ENCODE measurements at regions of chr7 and their contacts with region 1.

Region 1: GRCh38 chr7:98168181-98168905 is 42.9 kb upstream of the BHLHA15 start:
- DNase-seq: peak; percentile 73
- H3K4me3 ChIP-seq: no peak overlapping the region
- H3K27ac ChIP-seq: no peak overlapping the region
- H3K4me1 ChIP-seq: peaks cover 6% of the 10 kb centered on the region
- H3K27me3 ChIP-seq: no peaks in the 10 kb centered on the region
- CTCF ChIP-seq: peak; percentile 86

Region 2: DNA sequence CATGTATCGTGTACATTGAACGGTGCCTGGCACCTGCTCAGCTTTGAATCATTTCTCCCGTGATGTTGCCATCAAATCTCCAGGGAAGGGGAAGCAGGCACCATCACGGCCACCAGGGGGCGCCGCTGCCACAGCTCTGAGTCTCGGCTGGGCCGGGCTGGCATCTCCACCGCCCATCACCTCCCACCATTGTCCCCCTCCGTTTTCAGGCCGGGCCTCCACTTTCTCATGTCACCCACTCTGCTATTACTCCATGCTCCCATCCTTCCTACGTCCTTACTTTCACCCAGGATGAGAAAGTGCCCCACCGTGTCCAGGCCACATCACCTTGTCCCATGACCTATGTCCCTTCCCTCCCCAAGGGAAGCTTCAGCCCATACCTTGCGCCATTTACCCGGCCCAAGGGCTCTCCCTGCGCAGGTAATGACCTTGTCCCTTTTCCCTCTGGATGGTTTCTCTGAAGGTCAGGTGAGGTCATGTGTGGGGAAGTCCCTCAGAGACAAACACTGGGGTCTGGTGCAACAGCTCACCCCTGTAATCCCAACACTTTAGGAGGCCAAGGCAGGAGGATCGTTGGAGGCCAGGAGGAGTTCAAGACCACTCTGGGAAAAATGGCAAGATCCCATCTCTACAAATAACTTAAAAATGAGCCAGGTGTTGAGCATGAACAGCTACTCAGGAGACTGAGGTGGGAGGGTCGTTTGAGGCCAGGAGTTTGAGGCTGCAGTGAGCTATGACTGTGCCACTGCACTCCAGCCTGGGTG is 146.6 kb before region 1 on chr7:
- intact Hi-C with region 1: loop called (anchors 2 kb)
- DNase-seq: peak; percentile 86
- H3K4me3 ChIP-seq: no peak overlapping the region
- H3K27ac ChIP-seq: no peak overlapping the region
- H3K4me1 ChIP-seq: no peaks in the 10 kb centered on the region
- H3K27me3 ChIP-seq: no peaks in the 10 kb centered on the region
- CTCF ChIP-seq: peak; percentile 93

Region 3: GRCh38 chr7:98106647-98107445 is 61.5 kb before region 1 on chr7 and contains the start of gene LMTK2:
- intact Hi-C with region 1: loop called (anchors 5 kb)
- DNase-seq: peak; percentile 95
- H3K4me3 ChIP-seq: peak within 1 kb of the TSS; percentile 98
- H3K27ac ChIP-seq: peak within 1 kb of the TSS; percentile 88
- H3K4me1 ChIP-seq: peaks cover 15% of the 10 kb centered on the region
- H3K27me3 ChIP-seq: no peaks in the 10 kb centered on the region
- CTCF ChIP-seq: peak; percentile 89
- total RNA-seq, gene LMTK2: 37.2 to 61.2 TPM

Measured in colonic mucosa (tissue), 4 donors.